WTC11 (cell line): ENCODE measurements at regions of chr17 and their contacts with region 1.

Region 1: DNA sequence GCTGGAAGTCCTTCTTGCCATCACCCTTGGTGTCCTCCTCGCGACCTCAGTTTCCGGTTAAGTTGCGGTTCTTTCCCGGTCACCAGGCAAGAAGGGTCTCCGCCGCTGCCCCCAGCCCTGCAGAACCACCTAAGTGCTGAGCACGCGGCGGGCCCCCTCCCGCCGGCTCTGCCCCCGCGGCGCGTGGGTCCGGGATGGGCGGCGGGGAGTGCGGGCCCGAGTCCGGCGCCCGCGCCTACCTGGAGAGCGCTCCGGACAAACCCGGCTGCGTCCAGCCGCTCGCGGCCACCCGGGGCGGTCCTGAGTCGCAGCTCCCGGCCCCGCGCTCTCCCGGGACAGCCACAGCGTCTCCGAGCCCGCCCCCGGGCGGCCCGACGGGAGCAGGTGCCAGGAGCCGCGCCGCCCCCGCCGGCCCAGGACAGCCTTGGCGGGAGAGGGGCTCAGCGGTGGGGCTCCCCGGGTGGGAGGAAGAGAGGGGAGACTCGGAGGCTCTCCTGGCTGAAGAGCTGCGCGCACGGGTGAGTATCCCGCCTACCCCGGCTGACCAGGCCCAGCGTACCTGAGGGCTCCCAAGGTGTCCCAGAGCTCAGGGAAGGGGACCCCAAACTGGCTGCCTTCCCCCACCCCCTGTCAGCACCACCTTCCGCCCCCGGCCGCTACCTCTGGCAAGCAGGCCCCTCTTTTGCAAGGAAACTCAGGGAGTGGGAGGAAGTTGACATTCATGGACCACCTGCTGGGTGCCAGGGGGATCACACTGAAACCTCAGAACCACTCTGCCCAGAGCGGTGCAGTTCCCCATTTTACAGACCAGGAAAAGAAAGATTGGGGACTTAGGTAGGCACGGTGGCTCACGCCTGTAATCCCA is 22.2 kb upstream of the C17orf113 start:
- DNase-seq: peak; percentile 52
- ATAC-seq: peak; percentile 30
- H3K4me3 Mint-ChIP-seq: peak overlapping the region; percentile 77
- H3K27ac Mint-ChIP-seq: no peak overlapping the region
- H3K4me1 Mint-ChIP-seq: peaks cover 10% of the 10 kb centered on the region
- H3K27me3 Mint-ChIP-seq: peaks cover 11% of the 10 kb centered on the region
- CTCF ChIP-seq: no peak

Region 2: DNA sequence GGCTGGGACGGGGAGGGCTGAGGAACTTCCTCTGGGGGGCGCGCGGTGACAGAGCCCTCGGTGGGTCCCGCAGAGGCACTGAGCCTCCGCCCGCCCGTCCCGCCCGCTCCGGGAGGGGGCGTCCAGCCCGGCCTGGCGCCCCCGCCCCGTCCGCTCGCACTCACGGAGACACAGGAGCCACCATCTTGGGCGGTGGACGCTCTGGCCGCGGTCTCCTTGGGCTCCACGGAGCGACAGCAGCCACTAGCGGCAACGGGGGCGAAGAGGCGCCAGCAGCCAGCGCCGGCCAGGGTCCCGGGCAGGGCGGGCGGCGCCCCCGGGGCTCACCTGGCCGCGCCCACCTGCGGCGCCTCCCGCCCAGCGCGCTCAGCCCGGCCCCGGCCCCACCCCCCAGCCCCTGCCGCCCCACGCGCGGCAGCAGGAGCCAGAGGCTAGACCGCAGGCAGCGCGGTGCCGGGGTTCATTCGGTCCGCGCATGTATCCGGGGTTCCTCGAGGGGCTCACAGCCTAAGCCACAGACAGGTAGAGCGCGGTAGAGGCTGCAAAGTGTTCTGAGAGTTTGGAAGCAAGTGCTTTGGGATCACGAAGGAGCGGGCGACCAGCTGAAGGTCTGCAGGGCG is 22.1 kb before region 1 on chr17 and contains the start of gene C17orf113:
- CTCF ChIA-PET with region 1: interaction called, 11 read pairs
- POLR2A ChIA-PET with region 1: interaction called, 3 read pairs
- DNase-seq: peak; percentile 75
- ATAC-seq: peak; percentile 72
- H3K4me3 Mint-ChIP-seq: peak within 1 kb of the TSS; percentile 76
- H3K27ac Mint-ChIP-seq: no peak within 1 kb of the TSS
- H3K4me1 Mint-ChIP-seq: peaks cover 46% of the 10 kb centered on the region
- H3K27me3 Mint-ChIP-seq: peaks cover 9% of the 10 kb centered on the region
- CTCF ChIP-seq: no peak
- total RNA-seq, gene C17orf113: 1.9 to 2.8 TPM (median 2.5 TPM) in 3 replicates

Region 3: DNA sequence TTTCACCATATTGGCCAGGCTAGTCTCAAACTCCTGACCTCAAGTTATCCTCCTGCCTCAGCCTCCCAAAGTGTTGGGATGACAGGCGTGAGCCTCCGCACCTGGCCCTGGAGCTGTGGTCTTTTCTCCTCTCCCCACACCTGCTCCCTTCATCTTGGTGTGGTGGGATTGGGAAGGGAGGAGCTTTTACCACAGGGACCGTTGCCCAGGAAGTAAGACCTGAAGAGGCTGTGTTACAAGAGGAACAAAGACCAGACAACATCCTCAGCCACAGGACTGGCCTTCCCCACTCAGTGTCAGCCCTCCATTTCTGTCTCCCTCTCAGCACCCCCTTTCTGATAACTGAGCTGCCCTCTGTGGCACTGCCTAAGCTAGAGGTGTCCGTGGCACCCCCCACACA is 12.7 kb before region 1 on chr17:
- CTCF ChIA-PET with region 1: interaction called, 13 read pairs
- POLR2A ChIA-PET with region 1: interaction called, 3 read pairs
- DNase-seq: no peak
- ATAC-seq: no peak
- H3K4me3 Mint-ChIP-seq: no peak overlapping the region
- H3K27ac Mint-ChIP-seq: no peak overlapping the region; the same call in 1 of the 2 replicates
- H3K4me1 Mint-ChIP-seq: peaks cover 29% of the 10 kb centered on the region
- H3K27me3 Mint-ChIP-seq: no peaks in the 10 kb centered on the region; the same call in 1 of the 2 replicates
- CTCF ChIP-seq: no peak

Region 4: DNA sequence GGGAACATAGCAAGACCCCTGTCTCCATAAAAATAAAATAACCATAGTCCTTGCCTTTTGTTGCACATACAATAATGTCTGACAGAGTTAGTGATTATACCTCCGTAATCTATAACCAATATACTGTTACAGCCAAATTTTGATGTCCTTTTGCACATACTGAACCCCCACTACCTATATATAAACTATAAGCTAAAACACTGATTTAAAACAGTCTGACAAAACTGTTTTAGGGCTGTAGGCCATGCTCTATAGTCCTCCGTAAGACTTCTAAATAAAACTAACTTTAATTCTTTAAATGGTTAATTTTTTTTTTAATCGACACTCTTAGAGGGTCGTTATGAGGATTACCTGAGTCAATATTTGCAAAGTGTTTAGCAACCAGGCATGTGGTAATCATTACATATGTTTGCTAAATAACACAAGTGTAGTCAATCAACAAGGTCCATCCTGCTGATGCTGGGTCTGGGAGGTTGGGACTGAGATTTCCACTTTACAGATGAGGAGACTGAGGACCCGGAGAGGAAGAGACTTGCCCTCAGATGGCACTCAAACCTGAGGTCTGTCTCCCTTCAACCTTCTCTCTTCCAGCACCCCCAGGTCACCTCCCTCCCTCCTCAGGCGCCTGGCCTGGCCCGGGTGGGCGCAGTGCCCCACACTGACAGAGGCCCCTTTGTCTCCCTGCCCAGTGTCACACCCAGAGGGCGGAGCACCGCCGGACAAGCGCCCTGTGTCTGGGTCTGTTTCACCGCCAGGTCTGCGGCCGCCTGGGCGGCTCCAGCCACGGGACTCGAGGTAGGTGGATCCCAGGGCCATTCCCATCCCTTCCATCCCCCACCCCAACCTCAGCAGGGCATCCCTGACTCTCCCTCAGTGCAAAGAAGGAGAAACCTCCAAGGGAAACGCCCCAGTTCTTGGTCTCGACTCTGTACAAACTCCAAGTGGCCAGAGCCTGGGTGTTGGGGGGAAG is 15.5 kb after region 1 on chr17:
- CTCF ChIA-PET with region 1: interaction called, 11 read pairs
- POLR2A ChIA-PET with region 1: no interaction called
- DNase-seq: no peak
- ATAC-seq: peak; percentile 30
- H3K4me3 Mint-ChIP-seq: no peak overlapping the region
- H3K27ac Mint-ChIP-seq: no peak overlapping the region
- H3K4me1 Mint-ChIP-seq: peaks cover 15% of the 10 kb centered on the region
- H3K27me3 Mint-ChIP-seq: no peaks in the 10 kb centered on the region
- CTCF ChIP-seq: no peak